ENCODE measurements at regions of chr6 and their contacts with region 1.

Region 1: DNA sequence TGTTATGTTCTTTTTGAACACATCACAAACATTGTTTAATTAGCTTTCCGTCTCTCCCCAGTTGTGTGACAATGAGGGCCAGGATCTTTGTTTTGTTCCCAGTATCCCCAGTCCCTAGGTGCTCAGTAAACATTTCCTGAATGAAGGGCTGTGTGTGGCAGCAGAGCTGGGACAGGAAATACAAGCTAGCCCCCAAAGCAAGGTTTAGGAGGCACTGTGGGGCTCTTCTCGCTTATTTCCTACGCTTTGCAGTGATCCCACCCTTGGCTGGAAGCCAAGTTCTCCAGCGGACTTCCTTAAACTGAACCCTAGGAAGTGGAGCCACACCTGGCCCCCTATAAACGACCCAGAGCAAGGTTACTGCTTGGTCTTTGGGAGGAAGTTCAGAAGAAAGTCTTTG is 726 bp upstream of the FANCE start:
- DNase-seq: no peak
- ATAC-seq: no peak
- H3K4me3 ChIP-seq: peak overlapping the region in 1 of 2 donors; percentile 78
- H3K27ac ChIP-seq: peak overlapping the region in 1 of 2 donors; percentile 72
- H3K4me1 ChIP-seq: peaks cover 18 to 31% of the 10 kb centered on the region in 2 donors
- H3K27me3 ChIP-seq: no peaks in the 10 kb centered on the region
- CTCF ChIP-seq: no peak

Region 2: GRCh38 chr6:35342258-35343091 is 108.9 kb before region 1 on chr6 and contains the start of gene PPARD:
- intact Hi-C with region 1: loop called in 1 of 2 experiments (anchors 2 kb)
- DNase-seq: peak; percentile 98 to 100 (median 99)
- ATAC-seq: peak; percentile 99
- H3K4me3 ChIP-seq: peak within 1 kb of the TSS; percentile 97 to 98
- H3K27ac ChIP-seq: peak within 1 kb of the TSS; percentile 87 to 91
- H3K4me1 ChIP-seq: peaks cover 4 to 45% of the 10 kb centered on the region in 2 donors
- H3K27me3 ChIP-seq: no peaks in the 10 kb centered on the region
- CTCF ChIP-seq: peak; percentile 91 to 99
- polyA plus RNA-seq, gene PPARD: 21.0 to 25.4 (median 23.9) TPM